Right ventricle myocardium superior (tissue), 1 donor: ENCODE measurements at regions of chr15 and their contacts with region 1.

Region 1: DNA sequence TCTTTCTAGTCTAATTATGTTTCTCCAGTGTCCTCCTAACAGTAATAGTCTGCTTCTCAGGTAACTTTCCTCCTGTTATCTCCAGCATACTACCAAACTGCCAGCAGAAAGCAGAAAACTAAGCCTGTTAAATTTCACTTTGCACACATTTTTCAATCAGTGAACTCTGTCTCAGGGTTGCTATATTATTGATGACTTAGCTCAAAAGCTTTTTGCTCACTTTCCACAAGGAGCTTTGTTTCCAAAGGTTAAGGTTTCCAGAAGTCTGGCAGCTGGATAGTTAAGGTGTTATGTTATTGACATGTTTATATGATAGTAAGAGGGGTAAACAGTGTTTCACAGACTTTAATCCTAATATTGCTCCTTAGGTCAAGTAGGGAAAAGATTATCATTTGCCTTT is 5.1 kb downstream of the TRPM7 start:
- DNase-seq: no peak
- ATAC-seq: no peak

Region 2: GRCh38 chr15:50876989-50877360 is 195.5 kb after region 1 on chr15:
- intact Hi-C with region 1: loop called (anchors 5 kb)
- DNase-seq: peak; percentile 51
- ATAC-seq: peak; percentile 85